ENCODE measurements at regions of chr3 and their contacts with region 1.

Region 1: GRCh38 chr3:111989061-111989678 is 9.6 kb upstream of the TAGLN3 start:
- DNase-seq: peak in 1 of 2 experiments; percentile 44
- H3K4me3 ChIP-seq: no peak overlapping the region
- H3K4me3 Mint-ChIP-seq: no peak overlapping the region
- H3K27ac Mint-ChIP-seq: no peak overlapping the region
- H3K4me1 ChIP-seq: no peaks in the 10 kb centered on the region
- H3K4me1 Mint-ChIP-seq: no peaks in the 10 kb centered on the region
- H3K27me3 ChIP-seq: no peaks in the 10 kb centered on the region
- H3K27me3 Mint-ChIP-seq: no peaks in the 10 kb centered on the region
- CTCF ChIP-seq: peak; percentile 67 to 83

Region 2: DNA sequence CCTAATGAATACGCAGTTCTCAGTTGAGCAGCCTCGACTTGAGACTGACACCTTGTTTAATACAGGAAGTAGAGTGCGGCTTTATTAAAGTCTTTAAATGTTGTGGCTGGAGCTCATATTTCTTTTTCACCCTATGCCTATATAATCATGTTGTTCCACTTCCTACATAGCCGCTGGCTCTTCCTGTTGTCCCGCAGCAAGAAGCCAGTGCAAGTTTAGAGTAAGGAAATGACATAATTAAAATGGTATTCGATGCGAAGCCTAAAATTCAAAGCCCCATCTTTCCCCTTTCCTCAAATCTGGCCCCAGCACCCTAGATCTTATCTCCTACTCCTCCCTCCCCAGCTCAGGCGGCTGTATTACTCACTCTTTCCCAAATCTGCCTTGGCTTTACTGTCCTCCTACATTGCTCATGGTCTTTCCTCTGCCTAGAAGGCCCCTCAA is 137.6 kb before region 1 on chr3:
- CTCF ChIA-PET with region 1: no interaction called
- POLR2A ChIA-PET with region 1: no interaction called
- intact Hi-C with region 1: no loop called
- DNase-seq: no peak
- H3K4me3 ChIP-seq: no peak overlapping the region
- H3K4me3 Mint-ChIP-seq: no peak overlapping the region
- H3K27ac Mint-ChIP-seq: peak overlapping the region; percentile 17
- H3K4me1 ChIP-seq: 0 out of 2 replicates have a peak, but pooled peaks cover 4% of the 10 kb centered on the region
- H3K4me1 Mint-ChIP-seq: peaks cover 29% of the 10 kb centered on the region
- H3K27me3 ChIP-seq: no peaks in the 10 kb centered on the region
- H3K27me3 Mint-ChIP-seq: no peaks in the 10 kb centered on the region
- CTCF ChIP-seq: no peak

Region 3: GRCh38 chr3:111924283-111924682 is 64.9 kb before region 1 on chr3:
- CTCF ChIA-PET with region 1: no interaction called
- POLR2A ChIA-PET with region 1: no interaction called
- intact Hi-C with region 1: no loop called
- DNase-seq: no peak
- H3K4me3 ChIP-seq: no peak overlapping the region
- H3K4me3 Mint-ChIP-seq: no peak overlapping the region
- H3K27ac Mint-ChIP-seq: peak overlapping the region; percentile 40
- H3K4me1 ChIP-seq: no peaks in the 10 kb centered on the region
- H3K4me1 Mint-ChIP-seq: peaks cover 4% of the 10 kb centered on the region
- H3K27me3 ChIP-seq: no peaks in the 10 kb centered on the region
- H3K27me3 Mint-ChIP-seq: no peaks in the 10 kb centered on the region
- CTCF ChIP-seq: no peak

Region 4: DNA sequence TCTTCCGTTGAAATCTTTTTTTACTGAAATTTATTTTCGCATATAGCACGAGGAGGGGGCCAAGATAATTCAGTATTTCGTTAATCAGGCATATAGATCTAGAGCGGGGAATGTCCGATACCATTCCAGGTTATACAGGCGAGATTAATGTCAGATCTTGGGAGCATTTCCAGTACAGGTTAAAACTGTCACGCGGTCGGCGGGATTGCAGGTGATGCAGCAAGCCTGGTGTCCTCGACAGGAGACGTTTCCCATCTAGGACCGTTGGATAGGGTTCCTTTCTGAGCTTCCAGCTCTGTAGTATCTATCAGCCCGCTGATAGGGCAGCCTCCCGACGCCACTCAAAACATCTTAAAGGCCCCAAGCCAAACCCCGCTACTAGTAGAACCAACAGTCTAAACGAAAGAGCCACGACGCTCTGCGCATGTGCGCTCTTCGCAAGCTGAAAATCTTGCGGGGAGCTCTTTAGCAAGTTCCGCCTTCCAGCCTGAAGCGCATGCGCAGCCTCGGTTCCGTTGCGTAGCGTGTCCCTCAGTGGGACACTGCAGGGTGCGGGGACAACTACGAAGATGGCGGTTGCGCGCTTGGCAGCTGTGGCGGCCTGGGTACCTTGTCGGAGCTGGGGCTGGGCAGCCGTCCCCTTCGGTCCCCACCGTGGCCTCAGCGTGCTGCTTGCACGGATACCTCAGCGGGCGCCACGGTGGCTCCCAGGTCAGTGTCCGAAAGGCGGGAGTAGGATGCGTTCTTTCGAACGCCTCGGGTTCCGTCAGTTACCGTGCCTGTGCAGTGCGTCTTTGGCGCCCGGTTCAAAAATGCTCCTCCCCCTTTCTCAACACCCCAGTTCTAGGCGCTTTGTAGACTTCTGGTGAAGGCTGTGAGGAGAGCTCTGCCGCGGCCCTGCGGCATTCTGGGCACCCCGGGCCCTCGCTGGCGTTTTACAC is 10.4 kb before region 1 on chr3 and contains the start of gene ABHD10:
- CTCF ChIA-PET with region 1: interaction called, 13 read pairs
- POLR2A ChIA-PET with region 1: interaction called, 7 read pairs
- intact Hi-C with region 1: no loop called
- DNase-seq: peak; percentile 93 to 96
- H3K4me3 ChIP-seq: peak within 1 kb of the TSS; percentile 79
- H3K4me3 Mint-ChIP-seq: peak within 1 kb of the TSS; percentile 84
- H3K27ac Mint-ChIP-seq: peak within 1 kb of the TSS; percentile 88
- H3K4me1 ChIP-seq: no peaks in the 10 kb centered on the region; the same call in 1 of the 2 replicates
- H3K4me1 Mint-ChIP-seq: peaks cover 7% of the 10 kb centered on the region
- H3K27me3 ChIP-seq: no peaks in the 10 kb centered on the region
- H3K27me3 Mint-ChIP-seq: no peaks in the 10 kb centered on the region
- CTCF ChIP-seq: no peak
- total RNA-seq, gene ABHD10: 37.0 and 41.8 TPM in 2 replicates

Region 5: DNA sequence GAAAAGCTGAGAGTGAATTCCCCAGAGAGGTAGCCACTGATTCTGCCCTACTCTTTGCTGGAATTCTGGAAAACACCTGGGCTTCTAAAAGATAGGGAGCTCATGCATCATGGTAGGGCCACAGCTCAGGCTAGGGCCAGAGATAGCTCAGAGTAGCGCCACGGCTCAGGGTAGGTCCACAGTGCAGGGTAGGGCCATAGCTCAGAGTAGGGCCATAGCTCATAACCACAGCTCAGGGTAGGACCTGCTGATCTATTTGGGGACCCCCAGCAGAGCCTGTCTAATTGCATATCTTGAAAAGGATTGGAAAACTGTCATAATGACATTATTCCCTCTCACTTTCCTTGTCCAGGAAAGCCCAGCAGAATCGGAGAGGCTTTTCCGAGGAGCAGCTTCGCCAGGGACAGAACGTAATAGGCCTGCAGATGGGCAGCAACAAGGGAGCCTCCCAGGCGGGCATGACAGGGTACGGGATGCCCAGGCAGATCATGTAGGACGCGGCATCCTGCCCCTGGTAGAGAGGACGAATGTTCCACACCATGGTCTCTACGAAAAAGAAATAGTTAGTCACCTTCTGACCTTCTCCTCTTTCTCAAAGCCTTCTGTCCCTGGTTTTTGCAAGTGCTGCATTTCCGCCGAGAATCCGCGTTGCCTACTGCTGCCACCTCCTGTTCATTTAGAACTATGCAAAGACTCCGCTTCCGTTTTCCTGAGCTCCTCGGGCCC is 24.1 kb after region 1 on chr3:
- CTCF ChIA-PET with region 1: interaction called, 66 read pairs
- POLR2A ChIA-PET with region 1: no interaction called
- intact Hi-C with region 1: loop called (anchors 1 kb)
- DNase-seq: peak; percentile 57 to 66
- H3K4me3 ChIP-seq: no peak overlapping the region
- H3K4me3 Mint-ChIP-seq: no peak overlapping the region
- H3K27ac Mint-ChIP-seq: no peak overlapping the region
- H3K4me1 ChIP-seq: 0 out of 2 replicates have a peak, but pooled peaks cover 6% of the 10 kb centered on the region
- H3K4me1 Mint-ChIP-seq: no peaks in the 10 kb centered on the region
- H3K27me3 ChIP-seq: no peaks in the 10 kb centered on the region
- H3K27me3 Mint-ChIP-seq: no peaks in the 10 kb centered on the region
- CTCF ChIP-seq: peak; percentile 32 to 67

Region 6: DNA sequence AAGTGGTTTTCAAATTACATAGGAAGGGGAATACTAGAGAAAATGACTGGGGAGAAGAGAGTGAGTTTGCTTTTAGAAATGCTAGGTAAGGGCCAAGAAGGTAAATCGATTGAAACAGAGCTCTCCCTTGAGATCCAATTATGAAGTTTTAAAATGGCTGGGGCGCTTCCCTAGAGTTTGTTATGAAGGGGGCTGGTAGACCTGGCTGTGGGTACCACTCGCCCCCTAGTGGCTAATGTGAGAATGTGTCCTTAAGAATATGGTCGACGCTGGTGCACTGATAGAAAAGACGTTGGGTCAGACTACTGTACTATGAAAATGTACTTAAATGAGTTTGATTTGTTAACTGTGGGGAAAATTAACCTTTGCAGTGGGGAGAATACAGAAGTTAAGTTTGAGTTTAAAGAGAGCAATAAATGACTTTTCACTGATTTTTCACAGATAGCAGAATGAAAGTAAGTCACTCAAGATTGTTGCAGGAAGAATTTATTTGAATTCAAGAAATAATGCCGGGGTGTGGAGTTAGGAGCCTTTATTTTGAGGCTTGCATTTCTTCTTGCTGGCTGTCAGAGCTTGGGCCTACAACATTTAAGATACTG is 54.5 kb after region 1 on chr3:
- CTCF ChIA-PET with region 1: interaction called, 23 read pairs
- POLR2A ChIA-PET with region 1: no interaction called
- intact Hi-C with region 1: loop called (anchors 1 kb)
- DNase-seq: peak; percentile 66 to 71
- H3K4me3 ChIP-seq: no peak overlapping the region
- H3K4me3 Mint-ChIP-seq: no peak overlapping the region
- H3K27ac Mint-ChIP-seq: no peak overlapping the region
- H3K4me1 ChIP-seq: peaks cover 9% of the 10 kb centered on the region; the same call in 1 of the 2 replicates
- H3K4me1 Mint-ChIP-seq: peaks cover 6% of the 10 kb centered on the region
- H3K27me3 ChIP-seq: no peaks in the 10 kb centered on the region
- H3K27me3 Mint-ChIP-seq: no peaks in the 10 kb centered on the region
- CTCF ChIP-seq: peak; percentile 82 to 88

Region 7: DNA sequence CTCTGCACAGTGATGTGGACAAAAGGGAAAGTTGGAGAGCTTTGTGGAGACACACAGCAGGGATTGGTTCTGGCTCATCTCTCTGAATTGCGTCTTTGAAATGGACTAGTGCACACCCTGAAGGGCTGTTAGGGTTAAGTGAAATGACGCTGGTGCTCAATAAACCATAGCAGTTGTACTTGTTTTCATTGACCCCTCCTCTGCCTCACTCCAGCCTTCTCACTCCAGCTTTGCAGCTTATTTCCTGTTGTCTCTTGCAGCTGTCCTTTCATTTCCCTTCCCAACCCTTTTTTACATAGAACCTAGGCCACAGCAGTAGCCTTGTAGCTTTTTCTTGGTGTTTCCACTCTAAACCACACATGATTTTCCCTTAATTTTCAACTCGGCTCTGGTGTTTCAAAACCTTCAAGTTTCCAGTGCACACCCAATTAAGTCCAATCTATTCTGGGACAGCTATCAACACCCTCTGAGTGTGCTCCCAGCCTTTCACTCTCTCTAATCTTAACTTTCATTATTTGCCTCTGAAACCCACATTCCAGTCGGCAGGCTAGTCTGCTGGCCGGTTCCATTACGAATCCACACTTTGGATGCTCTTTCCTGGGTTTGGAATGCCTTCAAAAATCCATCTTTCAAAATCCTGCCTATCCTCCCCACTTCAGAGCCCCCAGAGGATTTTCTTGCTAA is 103.5 kb after region 1 on chr3:
- CTCF ChIA-PET with region 1: no interaction called
- POLR2A ChIA-PET with region 1: interaction called, 6 read pairs
- intact Hi-C with region 1: loop called (anchors 5 kb)
- DNase-seq: no peak
- H3K4me3 ChIP-seq: no peak overlapping the region
- H3K4me3 Mint-ChIP-seq: peak overlapping the region; percentile 13
- H3K27ac Mint-ChIP-seq: peak overlapping the region; percentile 29
- H3K4me1 ChIP-seq: peaks cover 65% of the 10 kb centered on the region
- H3K4me1 Mint-ChIP-seq: peaks cover 52% of the 10 kb centered on the region
- H3K27me3 ChIP-seq: no peaks in the 10 kb centered on the region
- H3K27me3 Mint-ChIP-seq: no peaks in the 10 kb centered on the region
- CTCF ChIP-seq: no peak

Measured in Caco-2 (cell line).